ENCODE measurements at regions of chr10 and their contacts with region 1.

Region 1: GRCh38 chr10:103069453-103070331 is 123.4 kb downstream of the NT5C2 start:
- DNase-seq: peak; percentile 34 to 69 (median 51)
- ATAC-seq: peak; percentile 84
- H3K4me3 ChIP-seq: no peak overlapping the region
- H3K27ac ChIP-seq: no peak overlapping the region
- H3K4me1 ChIP-seq: no peaks in the 10 kb centered on the region; a peak in 1 of 5 replicates
- H3K27me3 ChIP-seq: no peaks in the 10 kb centered on the region
- CTCF ChIP-seq: peak; percentile 64 to 74 (median 72)
- EP300 ChIP-seq: no peak
- POLR2A ChIP-seq: no peak
- RAD21 ChIP-seq: peak; percentile 81 to 91

Region 2: DNA sequence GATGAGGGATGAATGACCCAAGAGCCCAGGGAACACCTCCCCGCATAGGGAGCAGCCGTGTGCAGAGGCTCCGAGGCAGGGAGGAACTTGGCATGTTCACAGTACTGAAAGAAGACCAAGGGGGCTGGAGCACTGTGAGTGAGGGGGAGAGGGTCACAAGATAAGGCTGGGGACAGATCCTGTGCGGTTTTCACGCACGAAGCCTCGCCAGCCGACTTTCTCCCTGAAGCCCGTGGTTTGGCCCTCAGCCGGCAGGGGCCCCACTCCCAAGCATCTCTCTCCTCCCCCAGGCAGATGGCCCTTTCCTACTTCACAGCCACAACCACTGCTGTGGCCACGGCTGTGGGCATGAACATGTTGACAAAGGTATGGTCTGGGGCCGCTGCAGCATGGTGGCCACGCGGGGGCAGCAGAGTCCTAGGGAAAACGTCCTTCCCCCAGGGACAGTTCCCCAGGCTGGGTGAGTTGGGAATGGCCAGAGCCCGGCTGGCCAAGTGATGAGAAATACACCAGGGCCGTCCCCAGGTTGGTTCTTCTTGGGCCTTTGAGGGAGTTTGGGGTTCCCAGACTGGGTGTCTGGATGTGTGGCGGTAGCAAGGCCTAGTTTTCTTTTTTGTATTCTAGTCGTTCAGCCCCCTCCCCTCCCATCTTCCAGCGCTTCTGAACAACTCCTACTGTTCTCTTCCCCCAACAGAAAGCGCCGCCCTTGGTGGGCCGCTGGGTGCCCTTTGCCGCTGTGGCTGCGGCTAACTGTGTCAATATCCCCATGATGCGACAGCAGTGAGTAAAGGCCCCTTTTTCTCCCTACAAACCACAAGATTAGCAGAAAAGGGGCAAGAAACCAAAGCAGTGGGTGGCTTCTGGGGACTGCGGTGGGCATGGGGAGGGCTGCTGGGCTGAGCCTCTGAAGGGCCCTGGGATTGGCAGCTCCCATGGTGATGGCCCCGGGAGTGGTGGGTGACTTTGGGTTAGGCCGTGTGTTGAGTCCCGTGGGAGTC is 340.4 kb before region 1 on chr10:
- CTCF ChIA-PET with region 1: interaction called, 13 read pairs
- POLR2A ChIA-PET with region 1: no interaction called
- in situ Hi-C with region 1: loop called (anchors 5 kb)
- intact Hi-C with region 1: loop called (anchors 5 kb)
- DNase-seq: peak; percentile 69 to 76 (median 70)
- ATAC-seq: peak; percentile 99
- H3K4me3 ChIP-seq: no peak overlapping the region
- H3K27ac ChIP-seq: no peak overlapping the region
- H3K4me1 ChIP-seq: peaks cover 0 to 5% of the 10 kb centered on the region in 2 experiments; a peak in 1 of 5 replicates
- H3K27me3 ChIP-seq: no peaks in the 10 kb centered on the region
- CTCF ChIP-seq: peak; percentile 79 to 86 (median 82)
- EP300 ChIP-seq: no peak
- POLR2A ChIP-seq: no peak
- RAD21 ChIP-seq: peak; percentile 87 to 89

Region 3: DNA sequence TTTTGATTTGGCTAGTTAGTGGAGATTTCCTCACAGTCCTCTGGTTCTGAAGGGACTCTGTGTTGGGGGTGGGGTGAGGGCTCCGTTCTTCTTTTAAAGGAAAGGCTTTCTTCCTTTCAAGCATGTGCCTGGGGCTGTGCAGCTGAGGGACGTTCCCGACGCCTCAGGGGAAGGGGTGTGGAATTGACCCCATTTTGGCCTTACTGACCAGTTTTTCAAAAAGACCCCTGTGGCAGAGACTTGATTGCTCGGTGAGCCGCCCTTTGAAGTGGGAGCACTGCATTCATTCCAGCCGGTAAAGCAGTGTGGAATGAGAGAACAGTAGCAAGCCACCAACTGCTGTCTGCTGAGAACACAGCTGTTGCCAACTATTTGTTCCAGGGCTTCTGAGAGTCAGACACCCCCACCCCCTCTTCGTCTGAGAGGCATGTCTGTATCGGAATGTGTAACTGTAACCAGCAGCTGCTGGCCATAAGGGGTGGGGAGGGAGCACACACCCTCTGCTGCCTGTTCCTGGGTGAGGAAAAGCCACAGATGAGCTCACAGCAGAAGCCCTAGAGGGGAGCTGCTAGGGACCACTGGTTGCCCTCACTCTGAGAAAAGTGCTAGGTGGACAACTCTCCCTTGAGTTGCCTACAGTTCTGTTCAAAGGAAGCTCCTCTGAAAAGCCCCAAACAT is 292.8 kb before region 1 on chr10:
- CTCF ChIA-PET with region 1: no interaction called
- POLR2A ChIA-PET with region 1: no interaction called
- in situ Hi-C with region 1: no loop called
- intact Hi-C with region 1: no loop called
- DNase-seq: peak; percentile 67 to 73 (median 70)
- ATAC-seq: peak; percentile 81
- H3K4me3 ChIP-seq: no peak overlapping the region
- H3K27ac ChIP-seq: peak overlapping the region; percentile 50; the same call in 2 of the 3 replicates
- H3K4me1 ChIP-seq: peaks cover 41 to 57% of the 10 kb centered on the region in 2 experiments
- H3K27me3 ChIP-seq: no peaks in the 10 kb centered on the region
- CTCF ChIP-seq: no peak
- EP300 ChIP-seq: no peak
- POLR2A ChIP-seq: no peak
- RAD21 ChIP-seq: peak in 1 of 2 experiments; percentile 20; a peak in 1 of 4 replicates